ENCODE measurements at regions of chr12 and their contacts with region 1.

Region 1: DNA sequence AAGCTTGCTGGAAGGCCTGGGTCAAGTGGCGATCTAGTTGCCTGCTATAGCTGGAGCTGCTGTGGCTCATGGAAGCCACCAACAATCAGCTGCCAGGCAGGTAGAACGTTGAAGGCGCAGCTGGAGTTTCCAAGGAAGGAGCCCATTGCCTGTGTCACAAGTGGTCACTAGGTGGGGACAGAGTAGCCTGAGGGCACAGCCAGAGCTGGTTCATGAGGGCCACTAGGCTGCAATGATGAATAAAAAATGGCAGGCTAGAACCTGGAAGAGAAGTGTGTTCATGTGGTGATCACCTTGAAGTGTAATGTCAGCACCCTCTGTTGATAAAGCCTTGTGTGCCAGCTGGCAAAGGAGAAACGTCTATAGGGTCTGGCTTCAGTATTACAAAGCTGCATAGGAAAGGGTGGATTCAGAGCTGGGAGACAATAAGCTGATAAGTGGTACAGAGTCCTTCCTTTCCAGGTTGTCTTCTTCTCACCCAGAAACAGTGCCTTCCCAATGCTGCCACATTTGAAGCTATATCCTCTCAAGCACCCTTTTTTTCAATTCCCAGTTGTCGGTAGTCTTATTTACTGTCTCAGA is 165.8 kb downstream of the EMP1 start:
- DNase-seq: peak; percentile 66
- H3K4me3 Mint-ChIP-seq: no peak overlapping the region
- H3K27ac Mint-ChIP-seq: no peak overlapping the region
- H3K4me1 Mint-ChIP-seq: no peaks in the 10 kb centered on the region
- H3K27me3 Mint-ChIP-seq: peaks cover 10% of the 10 kb centered on the region

Region 2: GRCh38 chr12:13372386-13372785 is 10.0 kb after region 1 on chr12:
- CTCF ChIA-PET with region 1: interaction called, 14 read pairs
- DNase-seq: no peak
- H3K4me3 Mint-ChIP-seq: no peak overlapping the region
- H3K27ac Mint-ChIP-seq: no peak overlapping the region
- H3K4me1 Mint-ChIP-seq: no peaks in the 10 kb centered on the region
- H3K27me3 Mint-ChIP-seq: peaks cover 6% of the 10 kb centered on the region

Region 3: DNA sequence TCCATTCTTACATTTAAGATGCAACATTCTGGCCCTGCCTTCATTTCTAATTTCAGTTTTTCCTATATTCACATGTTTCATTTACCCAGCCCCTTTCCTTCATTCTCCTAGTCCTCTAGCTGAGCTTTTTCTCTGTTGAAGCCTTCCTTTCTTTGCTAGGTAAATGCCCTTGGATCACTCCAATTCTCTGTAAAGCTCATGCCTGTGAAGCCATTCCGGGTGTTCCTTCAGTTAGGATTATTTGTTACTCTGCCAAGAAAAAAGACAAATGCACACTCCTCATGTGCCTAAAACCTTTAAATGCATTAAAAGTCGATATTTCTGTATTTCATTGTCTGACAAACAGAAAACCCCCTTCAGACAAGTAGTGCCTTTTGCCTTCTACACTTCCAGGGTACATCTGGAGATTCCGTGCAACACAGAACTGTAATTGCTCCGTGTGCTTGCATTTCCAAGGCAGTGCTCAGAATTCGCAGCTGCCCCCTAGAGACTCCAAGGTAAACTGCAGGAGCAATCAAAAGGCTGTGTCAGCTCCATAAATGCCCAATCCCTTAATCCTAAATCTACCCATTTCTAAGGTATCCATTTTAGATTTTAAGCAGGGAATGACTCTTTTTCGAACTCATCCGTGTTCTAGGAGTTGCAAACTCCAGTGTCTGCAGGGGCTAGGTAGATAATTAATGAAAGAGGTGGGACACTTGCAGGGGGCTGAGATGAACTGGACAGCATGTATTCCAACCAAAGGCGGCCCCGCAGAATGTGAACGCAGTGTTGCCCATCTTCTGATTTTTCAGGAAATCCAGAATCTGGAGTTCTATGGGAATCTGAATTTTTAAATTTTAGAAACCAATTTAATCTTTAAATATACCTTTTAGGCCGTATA is 298.9 kb after region 1 on chr12:
- CTCF ChIA-PET with region 1: interaction called, 13 read pairs
- DNase-seq: peak; percentile 43
- H3K4me3 Mint-ChIP-seq: no peak overlapping the region
- H3K27ac Mint-ChIP-seq: no peak overlapping the region
- H3K4me1 Mint-ChIP-seq: no peaks in the 10 kb centered on the region
- H3K27me3 Mint-ChIP-seq: peaks cover 3% of the 10 kb centered on the region